ENCODE measurements at regions of chr3 and their contacts with region 1.

Region 1: DNA sequence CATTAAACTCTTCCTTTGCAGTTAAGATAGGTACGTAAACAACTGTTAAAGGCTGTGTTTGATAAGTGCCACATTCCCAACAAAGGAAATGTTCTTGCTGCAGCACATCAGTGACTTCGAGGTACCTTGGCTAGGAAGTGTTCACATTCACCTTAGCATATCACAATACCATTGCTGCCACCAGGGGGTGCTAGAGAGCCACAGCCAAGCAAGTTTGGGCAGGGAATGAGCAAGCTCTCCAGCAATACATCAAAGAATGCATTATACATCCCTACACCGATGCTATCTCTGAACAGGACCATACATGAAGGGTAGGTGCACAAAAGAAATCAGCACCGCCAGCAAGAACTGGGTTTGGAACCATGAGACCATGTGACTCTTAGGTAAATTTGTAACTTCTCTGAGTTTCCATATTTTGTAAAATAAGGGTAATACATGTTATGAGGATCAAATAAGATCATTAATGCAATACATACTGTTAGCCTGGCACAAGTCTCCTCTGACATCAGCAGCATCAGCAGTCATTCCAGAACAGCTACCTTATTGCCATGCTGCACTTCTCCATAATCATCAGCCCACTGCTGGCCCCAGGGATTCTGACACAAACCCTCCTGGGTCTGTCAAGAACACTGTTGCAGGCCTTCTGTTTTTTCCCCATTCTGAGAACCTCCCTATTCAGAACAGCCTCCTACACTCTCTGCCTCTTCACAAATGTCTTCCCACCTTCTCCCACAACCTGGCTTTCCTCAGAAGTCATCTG is 37.6 kb downstream of the RYK start:
- DNase-seq: peak; percentile 94
- ATAC-seq: peak; percentile 92
- H3K4me3 Mint-ChIP-seq: no peak overlapping the region
- H3K27ac Mint-ChIP-seq: no peak overlapping the region
- H3K4me1 Mint-ChIP-seq: peaks cover 30% of the 10 kb centered on the region
- H3K27me3 Mint-ChIP-seq: no peaks in the 10 kb centered on the region
- CTCF ChIP-seq: peak; percentile 97

Region 2: GRCh38 chr3:134232151-134232550 is 19.1 kb after region 1 on chr3:
- CTCF ChIA-PET with region 1: interaction called, 62 read pairs
- POLR2A ChIA-PET with region 1: interaction called, 4 read pairs
- intact Hi-C with region 1: no loop called
- DNase-seq: peak; percentile 35
- ATAC-seq: peak; percentile 84
- H3K4me3 Mint-ChIP-seq: peak overlapping the region; percentile 17
- H3K27ac Mint-ChIP-seq: peak overlapping the region; percentile 79
- H3K4me1 Mint-ChIP-seq: peaks cover 71% of the 10 kb centered on the region
- H3K27me3 Mint-ChIP-seq: no peaks in the 10 kb centered on the region
- CTCF ChIP-seq: no peak

Region 3: GRCh38 chr3:134250717-134251220 is 37.7 kb after region 1 on chr3 and contains the start of gene RYK:
- CTCF ChIA-PET with region 1: interaction called, 22 read pairs
- POLR2A ChIA-PET with region 1: no interaction called
- intact Hi-C with region 1: loop called (anchors 5 kb)
- DNase-seq: peak; percentile 77
- ATAC-seq: peak; percentile 69
- H3K4me3 Mint-ChIP-seq: peak within 1 kb of the TSS; percentile 87
- H3K27ac Mint-ChIP-seq: peak within 1 kb of the TSS; percentile 93
- H3K4me1 Mint-ChIP-seq: peaks cover 61% of the 10 kb centered on the region
- H3K27me3 Mint-ChIP-seq: peaks cover 6% of the 10 kb centered on the region
- CTCF ChIP-seq: no peak
- total RNA-seq, gene RYK: 19.8 to 21.9 TPM

Region 4: DNA sequence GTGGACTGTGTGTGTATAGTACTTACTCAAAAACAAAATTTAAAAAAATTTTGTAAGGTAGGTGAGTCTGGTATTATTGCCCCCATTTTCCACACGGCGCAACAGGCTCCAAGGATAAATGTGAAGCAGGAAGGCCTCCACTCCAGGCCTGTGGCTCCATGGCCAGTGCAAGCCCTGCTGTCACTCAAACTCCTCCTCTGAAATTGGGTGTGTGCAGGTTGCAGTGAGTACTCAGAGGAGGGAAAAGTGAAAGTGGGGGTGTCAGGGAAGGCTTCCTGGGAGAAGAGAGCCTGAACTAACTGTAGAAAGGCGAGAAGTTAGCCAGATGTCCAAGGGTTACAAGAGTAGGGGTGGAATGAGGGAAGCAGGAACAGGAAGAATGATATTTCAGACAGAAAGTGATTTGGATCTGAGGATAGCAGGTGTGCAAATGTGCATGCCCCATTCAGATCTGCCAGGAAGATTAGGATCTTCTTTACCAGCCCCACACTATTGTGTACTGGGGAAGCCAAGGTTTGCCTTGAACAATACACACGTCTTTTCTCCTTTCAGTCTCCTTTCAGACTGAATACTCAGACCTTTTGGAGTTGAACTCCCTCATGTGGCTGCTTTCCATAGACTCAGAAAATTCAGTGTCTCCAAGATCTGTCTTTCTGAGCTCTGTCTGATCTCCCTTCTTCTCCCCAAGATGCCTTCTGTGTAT is 86.2 kb after region 1 on chr3:
- CTCF ChIA-PET with region 1: interaction called, 55 read pairs
- POLR2A ChIA-PET with region 1: interaction called, 3 read pairs
- intact Hi-C with region 1: loop called (anchors 5 kb)
- DNase-seq: no peak
- ATAC-seq: peak; percentile 37
- H3K4me3 Mint-ChIP-seq: no peak overlapping the region
- H3K27ac Mint-ChIP-seq: no peak overlapping the region
- H3K4me1 Mint-ChIP-seq: no peaks in the 10 kb centered on the region
- H3K27me3 Mint-ChIP-seq: peaks cover 16% of the 10 kb centered on the region
- CTCF ChIP-seq: no peak

Region 5: DNA sequence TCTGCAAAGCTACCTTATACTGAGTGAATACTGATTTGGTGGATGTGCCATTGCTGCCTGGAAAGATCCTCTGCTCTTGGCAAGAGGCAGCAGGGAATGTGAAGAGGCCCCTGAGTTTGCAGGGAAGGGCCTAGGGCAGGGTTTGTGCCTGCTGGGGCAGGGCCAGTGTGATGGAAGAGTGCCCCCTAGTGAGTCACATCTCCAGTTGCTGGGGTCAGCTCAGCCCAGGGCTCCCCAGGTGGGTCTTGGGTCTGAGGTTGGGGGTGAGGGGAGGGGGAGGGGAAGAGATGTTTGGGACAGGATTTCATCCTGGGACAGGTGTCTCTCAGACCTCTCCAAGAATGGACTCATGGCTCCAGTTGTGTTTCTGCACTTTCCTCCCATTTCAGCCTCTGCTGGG is 165.3 kb after region 1 on chr3:
- CTCF ChIA-PET with region 1: interaction called, 11 read pairs
- POLR2A ChIA-PET with region 1: no interaction called
- intact Hi-C with region 1: loop called (anchors 5 kb)
- DNase-seq: peak; percentile 40
- ATAC-seq: peak; percentile 57
- H3K4me3 Mint-ChIP-seq: no peak overlapping the region
- H3K27ac Mint-ChIP-seq: no peak overlapping the region
- H3K4me1 Mint-ChIP-seq: peaks cover 8% of the 10 kb centered on the region
- H3K27me3 Mint-ChIP-seq: peaks cover 39% of the 10 kb centered on the region
- CTCF ChIP-seq: peak; percentile 36

Region 6: DNA sequence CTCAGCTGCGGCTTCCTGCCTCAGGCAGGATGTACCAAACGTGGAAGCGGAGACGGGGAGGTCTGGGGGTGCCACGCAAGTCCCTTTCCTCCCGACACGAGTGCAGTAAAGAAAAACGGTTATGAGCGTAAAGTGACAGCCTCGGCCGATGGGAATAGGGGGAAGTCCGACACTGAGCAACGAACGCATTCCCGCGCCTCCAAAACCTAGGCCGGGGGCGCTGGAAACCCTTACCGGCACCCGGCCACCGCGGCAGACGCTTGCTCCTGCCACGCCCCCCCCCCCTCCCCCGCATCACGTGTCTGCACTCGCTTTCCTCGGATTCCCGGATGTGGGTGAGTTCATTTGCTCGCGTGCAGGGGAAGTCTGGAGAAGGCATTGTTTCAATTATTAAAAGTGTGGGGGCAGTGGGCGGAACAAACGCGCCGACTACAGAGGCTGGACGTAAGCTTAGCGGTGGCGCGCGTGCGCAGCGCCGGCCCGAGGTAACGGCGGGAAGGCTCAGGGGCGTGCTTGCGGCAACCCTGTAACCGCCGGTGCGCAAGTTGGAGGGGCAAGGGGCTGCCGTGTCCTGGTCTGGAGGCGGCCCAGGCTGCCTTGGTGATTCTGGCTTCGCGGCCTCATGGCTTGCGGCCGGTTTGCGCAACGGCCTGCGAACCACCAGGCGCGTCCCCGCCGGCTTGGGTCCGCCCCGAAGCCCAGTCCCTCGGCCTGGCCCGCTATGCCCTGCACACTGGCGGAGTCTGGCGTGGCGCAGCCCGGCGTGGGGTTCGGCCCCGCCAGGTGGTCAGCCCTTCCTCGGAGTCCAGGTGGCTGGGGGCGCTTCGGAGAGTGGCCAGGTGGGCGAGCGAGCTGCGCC is 272.9 kb after region 1 on chr3 and contains the starts of genes ANAPC13 and CEP63:
- CTCF ChIA-PET with region 1: interaction called, 14 read pairs
- POLR2A ChIA-PET with region 1: no interaction called
- intact Hi-C with region 1: no loop called
- DNase-seq: peak; percentile 97
- ATAC-seq: peak; percentile 83
- H3K4me3 Mint-ChIP-seq: peak within 1 kb of the TSS; percentile 91
- H3K27ac Mint-ChIP-seq: peak within 1 kb of the TSS; percentile 99
- H3K4me1 Mint-ChIP-seq: peaks cover 45% of the 10 kb centered on the region
- H3K27me3 Mint-ChIP-seq: no peaks in the 10 kb centered on the region
- CTCF ChIP-seq: no peak
- total RNA-seq, gene ANAPC13: 27.3 to 28.0 TPM
- total RNA-seq, gene CEP63: 25.3 to 27.0 TPM